PC-3 (cell line): ENCODE measurements at regions of chr6 and their contacts with region 1.

Region 1: GRCh38 chr6:57316581-57317059 is 810 bp upstream of the PRIM2 start:
- DNase-seq: peak; percentile 96
- ATAC-seq: peak; percentile 65
- H3K4me3 ChIP-seq: peak overlapping the region; percentile 95
- H3K27ac ChIP-seq: peak overlapping the region; percentile 43
- H3K4me1 ChIP-seq: peaks cover 52% of the 10 kb centered on the region
- H3K27me3 ChIP-seq: no peaks in the 10 kb centered on the region
- CTCF ChIP-seq: peak; percentile 92

Region 2: GRCh38 chr6:56902641-56903464 is 413.8 kb before region 1 on chr6:
- CTCF ChIA-PET with region 1: interaction called, 4 read pairs
- POLR2A ChIA-PET with region 1: no interaction called
- intact Hi-C with region 1: loop called (anchors 1 kb)
- DNase-seq: peak; percentile 72
- ATAC-seq: no peak
- H3K4me3 ChIP-seq: no peak overlapping the region
- H3K27ac ChIP-seq: no peak overlapping the region
- H3K4me1 ChIP-seq: peaks cover 35% of the 10 kb centered on the region
- H3K27me3 ChIP-seq: no peaks in the 10 kb centered on the region
- CTCF ChIP-seq: peak; percentile 94

Region 3: DNA sequence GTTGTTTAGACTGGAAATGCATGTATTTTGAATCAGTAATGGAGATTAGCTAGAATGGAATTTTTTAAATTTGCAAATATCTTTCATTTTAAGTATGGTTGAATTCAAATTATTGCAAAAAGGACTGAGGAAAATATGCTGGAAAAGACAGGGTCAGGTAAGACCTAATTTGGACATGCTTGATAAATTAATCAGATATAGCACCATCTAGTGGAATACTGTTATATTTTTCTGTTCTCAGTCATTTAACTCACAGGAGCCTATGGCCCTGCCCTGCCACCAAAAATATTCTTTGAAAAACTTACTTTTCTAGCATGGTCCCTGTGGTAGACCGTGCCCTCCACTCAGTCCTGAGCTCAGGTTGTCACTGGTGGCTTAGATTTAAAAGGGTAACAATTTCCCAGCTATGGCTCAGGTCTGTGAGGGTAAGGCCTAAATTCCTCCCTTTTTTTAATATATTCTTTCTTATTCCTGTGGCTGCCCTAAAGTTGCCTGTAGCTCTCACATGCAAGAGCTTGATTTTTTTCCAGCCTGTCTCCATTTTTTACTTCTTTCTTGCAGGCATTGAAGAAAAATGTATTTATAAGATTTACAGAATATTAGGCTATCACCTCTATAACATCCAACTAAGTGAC is 295.4 kb before region 1 on chr6:
- CTCF ChIA-PET with region 1: no interaction called
- POLR2A ChIA-PET with region 1: no interaction called
- intact Hi-C with region 1: loop called (anchors 10 kb)
- DNase-seq: peak; percentile 81
- ATAC-seq: peak; percentile 95
- H3K4me3 ChIP-seq: no peak overlapping the region
- H3K27ac ChIP-seq: no peak overlapping the region
- H3K4me1 ChIP-seq: no peaks in the 10 kb centered on the region
- H3K27me3 ChIP-seq: no peaks in the 10 kb centered on the region
- CTCF ChIP-seq: peak; percentile 70

Region 4: GRCh38 chr6:57130661-57131177 is 185.9 kb before region 1 on chr6:
- CTCF ChIA-PET with region 1: no interaction called
- POLR2A ChIA-PET with region 1: no interaction called
- intact Hi-C with region 1: no loop called
- DNase-seq: no peak
- ATAC-seq: no peak
- H3K4me3 ChIP-seq: no peak overlapping the region
- H3K27ac ChIP-seq: no peak overlapping the region
- H3K4me1 ChIP-seq: no peaks in the 10 kb centered on the region
- H3K27me3 ChIP-seq: no peaks in the 10 kb centered on the region
- CTCF ChIP-seq: no peak

Region 5: GRCh38 chr6:57172136-57173055 is 144.2 kb before region 1 on chr6 and contains the start of gene BAG2:
- CTCF ChIA-PET with region 1: no interaction called
- POLR2A ChIA-PET with region 1: no interaction called
- intact Hi-C with region 1: loop called (anchors 1 kb)
- DNase-seq: peak; percentile 89
- ATAC-seq: peak; percentile 82
- H3K4me3 ChIP-seq: peak within 1 kb of the TSS; percentile 92
- H3K27ac ChIP-seq: peak within 1 kb of the TSS; percentile 69
- H3K4me1 ChIP-seq: peaks cover 19% of the 10 kb centered on the region
- H3K27me3 ChIP-seq: no peaks in the 10 kb centered on the region
- CTCF ChIP-seq: no peak
- total RNA-seq, gene BAG2: 8.9 and 10.4 TPM in 2 replicates

Region 6: GRCh38 chr6:57221936-57222742 is 94.5 kb before region 1 on chr6 and contains the start of gene RAB23:
- CTCF ChIA-PET with region 1: no interaction called
- POLR2A ChIA-PET with region 1: interaction called, 3 read pairs
- intact Hi-C with region 1: loop called (anchors 1 kb)
- DNase-seq: peak; percentile 90
- ATAC-seq: peak; percentile 78
- H3K4me3 ChIP-seq: peak within 1 kb of the TSS; percentile 92
- H3K27ac ChIP-seq: peak within 1 kb of the TSS; percentile 29; the same call in 1 of the 2 replicates
- H3K4me1 ChIP-seq: peaks cover 7% of the 10 kb centered on the region
- H3K27me3 ChIP-seq: no peaks in the 10 kb centered on the region
- CTCF ChIP-seq: peak; percentile 0; the same call in 1 of the 2 replicates
- total RNA-seq, gene RAB23: 8.2 and 11.2 TPM in 2 replicates

Region 7: DNA sequence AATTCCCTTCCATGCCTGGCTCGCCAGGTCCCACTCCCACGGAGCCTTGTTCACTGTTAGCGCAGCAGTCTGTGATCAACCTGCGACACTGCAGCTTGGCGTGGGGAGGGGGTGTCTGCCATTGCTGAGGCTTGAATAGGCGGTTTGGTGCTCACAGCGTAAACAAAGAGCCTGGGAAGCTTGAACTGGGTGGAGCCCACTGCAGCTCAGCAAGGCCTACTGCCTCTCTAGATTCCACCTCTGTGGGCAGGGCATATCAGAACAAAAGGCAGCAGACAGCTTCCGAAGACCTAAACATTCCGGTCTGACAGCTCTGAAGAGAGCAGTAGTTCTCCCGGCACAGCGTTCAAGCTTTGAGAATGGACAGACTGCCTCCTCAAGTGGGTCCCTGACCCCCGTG is 28.5 kb before region 1 on chr6:
- CTCF ChIA-PET with region 1: no interaction called
- POLR2A ChIA-PET with region 1: no interaction called
- intact Hi-C with region 1: no loop called
- DNase-seq: no peak
- ATAC-seq: no peak
- H3K4me3 ChIP-seq: no peak overlapping the region
- H3K27ac ChIP-seq: no peak overlapping the region
- H3K4me1 ChIP-seq: no peaks in the 10 kb centered on the region
- H3K27me3 ChIP-seq: no peaks in the 10 kb centered on the region
- CTCF ChIP-seq: no peak

Region 8: DNA sequence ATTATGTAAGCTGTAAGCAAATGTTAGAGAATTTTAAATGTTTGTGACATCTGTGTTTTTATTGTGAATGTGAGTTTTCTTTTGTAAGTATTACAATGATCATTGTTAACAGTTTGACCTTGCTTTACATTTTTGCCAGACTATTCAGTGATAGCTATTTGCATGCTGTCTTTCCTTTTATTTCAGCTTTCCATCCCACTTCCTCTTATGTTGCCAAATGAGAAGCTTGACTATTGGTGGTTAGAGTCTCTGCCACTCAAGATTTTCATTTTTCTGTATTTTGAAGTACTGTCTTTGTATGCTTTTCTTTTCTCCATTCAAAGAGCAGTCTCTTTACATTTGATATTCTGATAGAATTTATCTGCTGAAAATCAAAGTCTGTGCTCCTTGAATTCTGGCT is 104.9 kb after region 1 on chr6:
- CTCF ChIA-PET with region 1: no interaction called
- POLR2A ChIA-PET with region 1: no interaction called
- intact Hi-C with region 1: no loop called
- DNase-seq: no peak
- ATAC-seq: no peak
- H3K4me3 ChIP-seq: no peak overlapping the region
- H3K27ac ChIP-seq: no peak overlapping the region
- H3K4me1 ChIP-seq: no peaks in the 10 kb centered on the region
- H3K27me3 ChIP-seq: no peaks in the 10 kb centered on the region
- CTCF ChIP-seq: no peak